ENCODE measurements at regions of chr2 and their contacts with region 1.

Region 1: DNA sequence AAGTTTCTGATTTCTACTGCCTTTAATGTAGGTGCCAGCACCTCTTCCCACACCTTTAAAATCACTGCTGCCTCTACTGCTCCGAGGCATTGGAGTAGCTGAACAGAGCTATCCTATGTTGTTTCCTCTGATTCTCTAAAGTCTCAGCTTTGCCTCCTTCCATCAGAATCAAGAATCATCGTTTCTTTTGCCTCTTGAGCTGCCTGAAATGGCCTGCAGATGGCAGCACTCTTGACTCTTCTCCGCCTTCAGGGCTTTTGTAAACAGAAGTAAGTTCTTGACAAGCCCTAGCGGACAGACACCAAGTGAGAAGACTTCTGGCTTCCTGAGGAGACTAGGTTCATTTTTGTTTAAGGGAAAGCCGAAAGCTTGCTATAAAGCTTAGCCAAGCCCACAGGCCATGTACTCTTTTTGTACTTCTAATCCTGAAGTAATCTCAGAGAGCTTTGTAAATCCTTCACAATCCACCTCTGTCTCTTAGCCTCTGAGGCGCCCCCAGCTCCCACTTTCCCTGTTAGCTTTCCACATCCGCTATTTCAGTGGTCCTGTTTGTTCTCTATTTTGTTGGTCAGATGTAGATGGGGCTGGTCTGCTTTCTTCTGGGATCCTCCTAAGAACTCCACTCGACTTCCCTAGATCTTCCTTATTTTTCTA is 48.4 kb downstream of the GTF3C3 start:
- DNase-seq: peak; percentile 82
- ATAC-seq: peak; percentile 91
- H3K4me3 Mint-ChIP-seq: no peak overlapping the region
- H3K27ac Mint-ChIP-seq: peak overlapping the region; percentile 56
- H3K4me1 Mint-ChIP-seq: peaks cover 25% of the 10 kb centered on the region
- H3K27me3 Mint-ChIP-seq: no peaks in the 10 kb centered on the region

Region 2: DNA sequence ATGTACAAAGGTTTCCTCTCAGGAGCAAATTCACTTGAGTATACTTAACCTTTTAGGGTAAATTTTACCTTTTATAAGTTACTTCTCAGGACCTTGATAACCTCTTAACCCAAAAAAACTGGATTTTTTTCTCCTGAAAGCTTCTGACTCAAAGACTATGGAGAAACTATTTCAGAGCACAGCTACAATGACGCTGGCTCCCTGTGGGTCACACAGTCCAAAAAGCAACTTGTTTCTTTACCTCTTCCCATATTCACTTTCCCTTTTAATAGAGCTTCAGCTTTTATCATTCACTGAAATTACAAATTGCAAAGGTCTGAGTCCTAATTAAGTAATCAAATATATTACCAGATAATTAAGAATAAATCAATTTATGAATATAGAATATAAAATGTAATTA is 16.0 kb after region 1 on chr2:
- CTCF ChIA-PET with region 1: interaction called, 19 read pairs
- DNase-seq: no peak
- ATAC-seq: no peak
- H3K4me3 Mint-ChIP-seq: no peak overlapping the region
- H3K27ac Mint-ChIP-seq: no peak overlapping the region
- H3K4me1 Mint-ChIP-seq: no peaks in the 10 kb centered on the region
- H3K27me3 Mint-ChIP-seq: no peaks in the 10 kb centered on the region

Region 3: GRCh38 chr2:196902828-196903227 is 151.7 kb after region 1 on chr2:
- CTCF ChIA-PET with region 1: no interaction called
- DNase-seq: no peak
- ATAC-seq: no peak
- H3K4me3 Mint-ChIP-seq: no peak overlapping the region
- H3K27ac Mint-ChIP-seq: no peak overlapping the region
- H3K4me1 Mint-ChIP-seq: peaks cover 2% of the 10 kb centered on the region
- H3K27me3 Mint-ChIP-seq: no peaks in the 10 kb centered on the region

Measured in activated CD8-positive, alpha-beta memory T cell treated with anti-CD3 and anti-CD28 coated beads, Interleukin-2, amount 10 ng/mL, durations not matched to agents 7 days and 5 days (primary cell).